ENCODE measurements at regions of chr4 and their contacts with region 1.

Region 1: GRCh38 chr4:151356510-151356909 is 31.1 kb upstream of the SH3D19 start:
- DNase-seq: no peak
- H3K4me3 ChIP-seq: no peak overlapping the region
- H3K27ac ChIP-seq: no peak overlapping the region
- H3K27me3 ChIP-seq: no peaks in the 10 kb centered on the region
- CTCF ChIP-seq: no peak

Region 2: DNA sequence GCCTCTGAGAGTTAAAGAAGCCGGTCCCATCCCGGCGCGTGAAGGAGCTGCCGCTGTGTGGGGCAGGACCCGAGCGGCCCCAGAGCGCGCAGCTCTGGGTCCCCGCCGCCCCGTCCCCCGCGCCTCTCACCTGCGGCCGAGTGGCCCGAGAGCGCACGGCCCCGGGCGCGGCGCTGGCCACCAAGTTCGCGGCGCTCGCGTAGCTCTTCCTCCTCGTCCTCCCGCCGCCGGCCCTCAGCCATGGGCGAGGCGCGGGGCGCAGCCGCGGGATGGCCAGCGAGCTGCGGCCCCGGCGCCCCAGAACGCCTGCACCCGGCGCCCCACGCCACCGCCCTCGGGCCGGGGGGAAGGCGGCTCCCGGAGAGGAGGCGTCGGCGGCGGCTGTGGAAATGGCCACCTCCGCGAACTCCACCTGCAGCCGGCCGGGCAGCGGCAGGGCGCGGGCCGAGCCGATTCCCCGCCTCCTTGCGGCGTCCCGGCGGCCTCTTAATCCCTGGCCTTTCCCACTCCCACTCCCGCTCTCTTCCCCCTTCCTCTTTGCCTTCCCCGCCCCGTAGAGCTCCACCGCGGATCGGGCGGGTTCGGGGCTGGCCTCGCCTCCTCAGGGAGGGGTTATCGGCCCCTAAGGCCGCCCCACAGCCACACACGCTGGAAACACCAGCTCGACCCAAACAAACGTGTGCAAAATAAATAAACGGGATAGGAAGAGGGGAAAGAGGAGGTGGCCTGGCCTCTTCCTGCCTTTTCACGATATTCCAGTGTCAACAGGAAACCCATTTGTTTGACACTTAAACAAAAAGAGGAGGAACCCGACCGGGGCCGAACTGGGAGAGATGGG is 31.2 kb before region 1 on chr4 and contains the start of gene SH3D19:
- intact Hi-C with region 1: loop called (anchors 2 to 5 kb)
- DNase-seq: peak in 8 of 10 donors; percentile 27 to 66 (median 46)
- H3K4me3 ChIP-seq: peak within 1 kb of the TSS; percentile 49 to 92 (median 80)
- H3K27ac ChIP-seq: peak within 1 kb of the TSS; percentile 41 to 95 (median 84)
- H3K27me3 ChIP-seq: no peaks in the 10 kb centered on the region
- CTCF ChIP-seq: peak in 5 of 56 donors; percentile 3 to 30 (median 14)
- total RNA-seq, gene SH3D19: 15.3 to 70.0 (median 34.6) TPM

Region 3: DNA sequence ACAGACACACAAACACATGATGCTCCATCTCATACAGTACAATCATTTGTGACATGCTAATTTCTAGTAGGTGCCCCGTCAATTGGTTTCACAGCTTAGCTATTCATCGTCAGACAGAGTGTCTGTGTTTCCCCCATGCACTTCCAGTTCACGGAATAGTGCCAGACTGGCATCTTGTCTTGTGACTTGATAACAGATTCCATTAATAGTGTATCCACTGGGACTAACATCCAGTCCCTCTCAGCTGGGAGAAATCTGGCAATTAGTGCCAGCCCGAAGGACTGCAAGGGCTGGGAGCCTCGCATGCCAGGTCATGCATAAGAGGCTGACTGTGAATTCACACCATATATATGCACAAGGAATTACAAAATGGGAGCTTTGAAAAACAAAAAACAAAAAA is 424.5 kb after region 1 on chr4:
- intact Hi-C with region 1: no loop called
- DNase-seq: peak in 2 of 10 donors; percentile 35 to 53
- H3K4me3 ChIP-seq: peak overlapping the region in 4 of 59 donors; percentile 0 to 12 (median 6)
- H3K27ac ChIP-seq: no peak overlapping the region
- H3K27me3 ChIP-seq: no peaks in the 10 kb centered on the region
- CTCF ChIP-seq: no peak

Measured in dorsolateral prefrontal cortex (tissue), 120 donors.